ENCODE measurements at regions of chr20 and their contacts with region 1.

Region 1: DNA sequence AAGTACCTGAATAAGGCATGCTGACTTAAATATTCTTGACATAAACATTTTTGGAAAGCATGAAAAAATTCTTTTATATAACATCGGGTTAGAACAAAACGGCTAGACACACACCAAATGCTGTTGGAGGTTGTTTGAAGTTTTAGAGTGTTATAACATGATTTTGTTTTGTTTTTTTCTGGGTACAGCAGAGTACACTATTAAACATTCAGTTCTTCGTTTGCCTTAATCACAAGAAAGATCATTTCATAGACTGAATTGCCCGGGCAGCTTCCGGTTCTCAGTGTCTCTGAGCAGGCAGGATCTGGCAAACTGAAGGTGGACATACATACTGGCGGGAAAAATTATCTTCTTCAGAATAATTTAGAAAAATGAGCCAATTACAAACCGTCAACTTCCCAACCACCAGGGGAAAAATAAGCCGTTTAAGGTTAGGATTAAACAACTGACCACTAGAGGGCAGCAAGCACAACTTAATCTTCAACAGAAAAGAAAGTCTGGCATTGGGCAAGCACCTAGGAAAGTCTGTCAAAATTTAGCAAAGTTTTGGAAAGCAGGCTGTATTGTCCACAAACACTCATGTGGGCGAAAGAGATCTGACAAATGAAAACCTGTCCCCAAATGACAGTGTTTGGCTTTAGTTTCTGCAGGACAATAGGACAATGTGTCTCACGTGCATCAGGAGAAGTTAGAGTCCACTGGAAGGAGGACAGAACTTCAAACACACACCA is 15.0 kb downstream of the ZNF217 start:
- DNase-seq: peak; percentile 30 to 95
- ATAC-seq: peak; percentile 55 to 84 (median 81)
- H3K4me3 ChIP-seq: no peak overlapping the region
- H3K4me3 Mint-ChIP-seq: peak overlapping the region; percentile 74
- H3K27ac ChIP-seq: peak overlapping the region; percentile 46
- H3K27ac Mint-ChIP-seq: peak overlapping the region; percentile 90 to 92
- H3K4me1 ChIP-seq: peaks cover 45% of the 10 kb centered on the region
- H3K4me1 Mint-ChIP-seq: peaks cover 51 to 55% of the 10 kb centered on the region in 2 donors
- H3K27me3 ChIP-seq: no peaks in the 10 kb centered on the region
- H3K27me3 Mint-ChIP-seq: no peaks in the 10 kb centered on the region
- CTCF ChIP-seq: peak; percentile 97

Region 2: GRCh38 chr20:53594068-53595017 is 15.7 kb after region 1 on chr20:
- intact Hi-C with region 1: no loop called
- DNase-seq: peak; percentile 96 to 99
- ATAC-seq: peak; percentile 73 to 94 (median 83)
- H3K4me3 ChIP-seq: peak overlapping the region; percentile 91
- H3K4me3 Mint-ChIP-seq: peak overlapping the region; percentile 88
- H3K27ac ChIP-seq: peak overlapping the region; percentile 99
- H3K27ac Mint-ChIP-seq: peak overlapping the region; percentile 91 to 92
- H3K4me1 ChIP-seq: peaks cover 19% of the 10 kb centered on the region
- H3K4me1 Mint-ChIP-seq: peaks cover 38 to 64% of the 10 kb centered on the region in 2 donors
- H3K27me3 ChIP-seq: no peaks in the 10 kb centered on the region
- H3K27me3 Mint-ChIP-seq: no peaks in the 10 kb centered on the region
- CTCF ChIP-seq: no peak

Region 3: DNA sequence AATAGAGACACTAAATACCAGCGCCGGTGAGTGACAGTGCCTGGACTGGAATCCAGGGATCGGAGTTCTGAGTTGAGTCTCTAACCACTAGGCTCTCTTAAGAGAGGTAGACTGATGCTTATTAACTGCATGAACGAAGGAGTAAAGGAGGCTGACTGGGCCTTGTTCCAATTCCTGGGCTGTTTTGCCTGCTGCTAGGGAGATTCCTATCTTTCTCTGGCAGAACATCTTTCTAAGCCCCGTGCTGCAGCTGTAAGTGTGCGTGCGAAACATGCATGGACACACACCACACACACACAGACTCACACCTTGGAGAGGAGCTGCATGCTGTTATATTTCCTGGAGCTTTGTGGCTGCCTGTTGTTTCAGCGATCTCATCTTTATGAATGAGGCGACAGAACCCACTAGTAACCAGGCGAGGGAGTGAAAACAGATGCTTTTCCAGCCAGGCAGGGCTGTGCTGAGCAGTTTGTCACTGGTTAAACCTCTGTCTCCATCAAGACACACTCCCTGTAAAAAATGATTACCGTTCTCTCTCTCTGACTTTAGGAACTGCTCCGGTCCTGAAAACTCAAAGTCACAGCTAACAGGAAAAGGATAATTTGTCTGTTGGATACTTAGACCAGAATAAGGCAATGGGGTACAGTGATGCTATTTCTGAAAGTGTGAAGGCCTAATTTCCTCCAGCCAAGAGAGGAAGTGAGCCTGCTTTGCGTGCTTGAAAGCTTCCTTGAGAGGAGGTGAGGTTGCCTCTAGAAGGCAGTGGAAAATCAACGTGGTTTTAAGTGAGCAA is 172.4 kb after region 1 on chr20:
- intact Hi-C with region 1: loop called (anchors 5 kb)
- DNase-seq: peak; percentile 40 to 71
- ATAC-seq: peak; percentile 60 to 74 (median 63)
- H3K4me3 ChIP-seq: no peak overlapping the region
- H3K4me3 Mint-ChIP-seq: peak overlapping the region; percentile 74
- H3K27ac ChIP-seq: peak overlapping the region; percentile 80
- H3K27ac Mint-ChIP-seq: peak overlapping the region; percentile 92 to 94
- H3K4me1 ChIP-seq: peaks cover 46% of the 10 kb centered on the region
- H3K4me1 Mint-ChIP-seq: peaks cover 39 to 49% of the 10 kb centered on the region in 2 donors
- H3K27me3 ChIP-seq: no peaks in the 10 kb centered on the region
- H3K27me3 Mint-ChIP-seq: peaks cover 0 to 6% of the 10 kb centered on the region in 2 donors
- CTCF ChIP-seq: no peak

Region 4: GRCh38 chr20:53839423-53840176 is 260.9 kb after region 1 on chr20:
- intact Hi-C with region 1: loop called (anchors 5 kb)
- DNase-seq: peak; percentile 61 to 85
- ATAC-seq: peak; percentile 51 to 82 (median 74)
- H3K4me3 ChIP-seq: no peak overlapping the region
- H3K4me3 Mint-ChIP-seq: peak overlapping the region; percentile 96
- H3K27ac ChIP-seq: peak overlapping the region; percentile 69
- H3K27ac Mint-ChIP-seq: peak overlapping the region; percentile 84 to 89
- H3K4me1 ChIP-seq: peaks cover 84% of the 10 kb centered on the region
- H3K4me1 Mint-ChIP-seq: peaks cover 72% of the 10 kb centered on the region in 2 donors
- H3K27me3 ChIP-seq: no peaks in the 10 kb centered on the region
- H3K27me3 Mint-ChIP-seq: no peaks in the 10 kb centered on the region
- CTCF ChIP-seq: no peak

Region 5: GRCh38 chr20:53869466-53870258 is 291.0 kb after region 1 on chr20:
- intact Hi-C with region 1: loop called (anchors 2 kb)
- DNase-seq: peak; percentile 41 to 90
- ATAC-seq: peak; percentile 86 to 88 (median 87)
- H3K4me3 ChIP-seq: no peak overlapping the region
- H3K4me3 Mint-ChIP-seq: peak overlapping the region; percentile 50
- H3K27ac ChIP-seq: peak overlapping the region; percentile 40
- H3K27ac Mint-ChIP-seq: peak overlapping the region; percentile 69 to 79
- H3K4me1 ChIP-seq: peaks cover 37% of the 10 kb centered on the region
- H3K4me1 Mint-ChIP-seq: peaks cover 54 to 63% of the 10 kb centered on the region in 2 donors
- H3K27me3 ChIP-seq: no peaks in the 10 kb centered on the region
- H3K27me3 Mint-ChIP-seq: no peaks in the 10 kb centered on the region
- CTCF ChIP-seq: peak; percentile 84

Region 6: DNA sequence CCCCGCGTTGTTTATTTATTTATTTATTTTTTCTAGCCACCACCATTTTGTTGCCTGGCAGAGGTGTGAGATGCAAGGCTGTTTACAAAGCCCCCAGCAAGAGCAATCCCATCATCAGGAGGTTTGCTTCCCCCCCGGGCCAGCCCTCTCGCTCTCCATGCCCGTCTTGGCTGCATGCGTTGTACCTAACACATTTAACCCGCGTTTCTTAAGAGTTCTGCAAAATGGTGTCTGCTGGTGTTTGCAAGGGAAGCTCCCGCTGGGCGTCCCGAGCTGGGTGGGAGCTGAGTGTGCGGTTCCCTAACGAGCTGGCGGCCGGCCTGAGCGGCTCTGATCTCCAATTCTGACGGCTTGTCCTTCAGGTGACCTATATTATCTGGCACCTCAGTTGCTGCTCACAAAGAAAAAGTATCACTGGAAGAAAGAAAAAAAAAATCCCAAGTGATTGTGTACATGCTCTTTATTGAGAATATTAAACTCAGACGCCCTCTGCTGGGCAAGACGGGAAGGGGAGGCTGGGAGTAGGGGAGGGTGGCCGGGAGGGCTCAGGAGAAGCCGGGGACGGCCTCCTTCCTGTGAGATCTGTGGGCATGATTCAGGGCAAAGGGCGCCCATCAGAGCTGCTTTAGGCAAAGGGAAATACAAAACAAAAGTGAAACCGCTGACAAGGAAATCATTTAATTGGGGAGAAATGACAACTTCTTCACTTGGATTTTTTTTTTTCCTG is 337.0 kb after region 1 on chr20:
- intact Hi-C with region 1: loop called (anchors 1 kb)
- DNase-seq: peak; percentile 87 to 95
- ATAC-seq: peak; percentile 95 to 97 (median 97)
- H3K4me3 ChIP-seq: peak overlapping the region; percentile 84
- H3K4me3 Mint-ChIP-seq: peak overlapping the region; percentile 99
- H3K27ac ChIP-seq: peak overlapping the region; percentile 63
- H3K27ac Mint-ChIP-seq: peak overlapping the region; percentile 93 to 95
- H3K4me1 ChIP-seq: peaks cover 23% of the 10 kb centered on the region
- H3K4me1 Mint-ChIP-seq: peaks cover 15 to 26% of the 10 kb centered on the region in 2 donors
- H3K27me3 ChIP-seq: no peaks in the 10 kb centered on the region
- H3K27me3 Mint-ChIP-seq: no peaks in the 10 kb centered on the region
- CTCF ChIP-seq: peak; percentile 84

Region 7: GRCh38 chr20:53939572-53940359 is 361.1 kb after region 1 on chr20:
- intact Hi-C with region 1: loop called (anchors 1 kb)
- DNase-seq: peak; percentile 52 to 81
- ATAC-seq: peak; percentile 73 to 81 (median 75)
- H3K4me3 ChIP-seq: no peak overlapping the region
- H3K4me3 Mint-ChIP-seq: no peak overlapping the region
- H3K27ac ChIP-seq: no peak overlapping the region
- H3K27ac Mint-ChIP-seq: peak overlapping the region in 1 of 2 donors; percentile 36
- H3K4me1 ChIP-seq: peaks cover 39% of the 10 kb centered on the region
- H3K4me1 Mint-ChIP-seq: peaks cover 35 to 50% of the 10 kb centered on the region in 2 donors
- H3K27me3 ChIP-seq: no peaks in the 10 kb centered on the region
- H3K27me3 Mint-ChIP-seq: peaks cover 0 to 5% of the 10 kb centered on the region in 2 donors
- CTCF ChIP-seq: peak; percentile 65

Region 8: GRCh38 chr20:54062812-54063280 is 484.2 kb after region 1 on chr20:
- intact Hi-C with region 1: loop called (anchors 10 kb)
- DNase-seq: peak in 1 of 2 donors; percentile 60
- ATAC-seq: no peak
- H3K4me3 ChIP-seq: no peak overlapping the region
- H3K4me3 Mint-ChIP-seq: no peak overlapping the region
- H3K27ac ChIP-seq: no peak overlapping the region
- H3K27ac Mint-ChIP-seq: no peak overlapping the region
- H3K4me1 ChIP-seq: peaks cover 15% of the 10 kb centered on the region
- H3K4me1 Mint-ChIP-seq: peaks cover 16 to 20% of the 10 kb centered on the region in 2 donors
- H3K27me3 ChIP-seq: no peaks in the 10 kb centered on the region
- H3K27me3 Mint-ChIP-seq: no peaks in the 10 kb centered on the region
- CTCF ChIP-seq: peak; percentile 48

Measured in natural killer cell (primary cell).